Prostate gland (tissue), 2 donors: ENCODE measurements at regions of chr1 and their contacts with region 1.

Region 1: DNA sequence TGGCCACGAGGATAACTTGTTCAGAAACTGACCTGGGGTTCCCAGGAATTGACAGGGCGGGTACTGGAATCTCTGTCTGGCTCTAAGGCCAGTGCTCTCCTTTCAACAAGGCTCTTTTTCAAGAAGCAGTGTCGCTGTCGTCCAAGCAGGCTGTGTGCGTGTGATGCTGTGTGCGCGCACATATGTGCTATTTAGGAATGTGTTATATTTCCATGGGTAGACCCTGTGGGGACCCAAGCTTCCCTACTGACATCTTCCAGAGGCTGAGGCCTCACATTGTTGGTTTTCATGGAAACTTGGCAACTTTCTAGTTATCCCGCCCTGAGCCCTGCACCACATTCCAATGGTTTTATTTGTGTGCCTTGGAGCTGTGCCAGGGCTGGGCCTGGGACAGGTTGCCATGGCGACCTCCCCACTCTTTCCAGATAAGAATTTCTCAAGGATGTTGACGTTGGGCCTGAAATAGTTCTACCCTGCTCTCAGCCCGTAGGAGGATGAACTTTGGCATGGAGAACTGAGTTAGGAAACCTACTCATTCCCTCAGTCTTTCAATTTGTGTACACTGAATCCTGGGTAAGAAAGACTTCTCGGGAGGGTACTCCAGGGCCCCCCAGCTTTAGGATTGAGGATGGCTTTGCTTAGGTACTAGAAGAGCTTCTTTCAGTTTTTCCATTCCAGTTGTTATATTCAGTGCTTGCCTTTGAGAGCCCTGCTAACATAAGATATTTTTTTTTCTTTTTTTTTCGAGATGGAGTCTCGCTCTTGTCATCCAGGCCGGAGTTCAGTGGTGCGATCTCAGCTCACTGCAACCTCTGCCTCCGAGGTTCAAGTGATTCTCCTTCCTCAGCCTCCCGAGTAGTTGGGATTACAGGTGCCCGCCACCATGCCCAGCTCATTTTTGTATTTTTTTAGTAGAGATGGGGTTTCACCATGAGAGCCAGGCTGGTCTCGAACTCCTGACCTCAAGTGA is 38.8 kb upstream of the SRSF10 start:
- DNase-seq: peak; percentile 99
- H3K4me3 ChIP-seq: no peak overlapping the region
- H3K27ac ChIP-seq: peak overlapping the region; percentile 87 to 89
- H3K4me1 ChIP-seq: peaks cover 17% of the 10 kb centered on the region
- H3K27me3 ChIP-seq: no peaks in the 10 kb centered on the region
- CTCF ChIP-seq: peak in 1 of 4 experiments; percentile 34
- POLR2A ChIP-seq: no peak

Region 2: GRCh38 chr1:23793018-23793781 is 225.7 kb before region 1 on chr1:
- intact Hi-C with region 1: no loop called
- DNase-seq: peak; percentile 50
- H3K4me3 ChIP-seq: peak overlapping the region in 1 of 2 donors; percentile 71
- H3K27ac ChIP-seq: peak overlapping the region in 1 of 2 donors; percentile 3
- H3K4me1 ChIP-seq: peaks cover 16% of the 10 kb centered on the region
- H3K27me3 ChIP-seq: no peaks in the 10 kb centered on the region
- CTCF ChIP-seq: no peak
- POLR2A ChIP-seq: no peak

Region 3: DNA sequence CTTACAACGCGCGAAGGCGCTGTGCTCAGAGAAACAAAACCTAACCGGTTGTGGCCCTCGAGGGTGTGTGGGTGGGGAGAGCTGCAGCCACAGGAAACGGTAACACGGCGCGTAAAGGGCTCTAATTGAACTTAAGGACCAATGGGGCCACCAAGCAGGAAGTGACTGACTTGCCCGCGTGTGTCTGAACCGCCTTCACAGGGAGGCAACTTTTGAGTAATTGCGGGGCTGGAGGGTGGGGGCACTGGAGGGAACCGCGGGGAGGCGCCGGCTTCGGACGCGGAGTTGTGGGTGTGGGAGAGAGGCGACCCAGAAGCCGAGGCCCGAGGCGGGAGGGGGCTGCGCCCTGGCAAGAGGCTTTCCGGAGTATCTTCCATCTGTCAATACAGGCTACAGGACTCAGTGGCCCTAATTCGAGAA is 59.8 kb before region 1 on chr1:
- intact Hi-C with region 1: loop called (anchors 5 kb)
- DNase-seq: peak; percentile 72
- H3K4me3 ChIP-seq: peak overlapping the region; percentile 59 to 82
- H3K27ac ChIP-seq: peak overlapping the region; percentile 98
- H3K4me1 ChIP-seq: no peaks in the 10 kb centered on the region
- H3K27me3 ChIP-seq: no peaks in the 10 kb centered on the region
- CTCF ChIP-seq: peak in 2 of 4 experiments; percentile 36 to 49
- POLR2A ChIP-seq: peak; percentile 2

Region 4: GRCh38 chr1:23979878-23980724 is 38.8 kb before region 1 on chr1 and contains the start of gene SRSF10:
- intact Hi-C with region 1: loop called (anchors 2 kb)
- DNase-seq: peak; percentile 98
- H3K4me3 ChIP-seq: peak within 1 kb of the TSS; percentile 94 to 98
- H3K27ac ChIP-seq: peak within 1 kb of the TSS; percentile 95 to 97
- H3K4me1 ChIP-seq: peaks cover 5% of the 10 kb centered on the region
- H3K27me3 ChIP-seq: no peaks in the 10 kb centered on the region
- CTCF ChIP-seq: peak in 3 of 4 experiments; percentile 42 to 85 (median 71)
- POLR2A ChIP-seq: peak; percentile 95
- total RNA-seq, gene SRSF10: 94.3 to 94.9 TPM